Activated B cell treated with CpG ODN at 0.5 μM for 24 hours (primary cell): ENCODE measurements at regions of chrX and their contacts with region 1.

Region 1: DNA sequence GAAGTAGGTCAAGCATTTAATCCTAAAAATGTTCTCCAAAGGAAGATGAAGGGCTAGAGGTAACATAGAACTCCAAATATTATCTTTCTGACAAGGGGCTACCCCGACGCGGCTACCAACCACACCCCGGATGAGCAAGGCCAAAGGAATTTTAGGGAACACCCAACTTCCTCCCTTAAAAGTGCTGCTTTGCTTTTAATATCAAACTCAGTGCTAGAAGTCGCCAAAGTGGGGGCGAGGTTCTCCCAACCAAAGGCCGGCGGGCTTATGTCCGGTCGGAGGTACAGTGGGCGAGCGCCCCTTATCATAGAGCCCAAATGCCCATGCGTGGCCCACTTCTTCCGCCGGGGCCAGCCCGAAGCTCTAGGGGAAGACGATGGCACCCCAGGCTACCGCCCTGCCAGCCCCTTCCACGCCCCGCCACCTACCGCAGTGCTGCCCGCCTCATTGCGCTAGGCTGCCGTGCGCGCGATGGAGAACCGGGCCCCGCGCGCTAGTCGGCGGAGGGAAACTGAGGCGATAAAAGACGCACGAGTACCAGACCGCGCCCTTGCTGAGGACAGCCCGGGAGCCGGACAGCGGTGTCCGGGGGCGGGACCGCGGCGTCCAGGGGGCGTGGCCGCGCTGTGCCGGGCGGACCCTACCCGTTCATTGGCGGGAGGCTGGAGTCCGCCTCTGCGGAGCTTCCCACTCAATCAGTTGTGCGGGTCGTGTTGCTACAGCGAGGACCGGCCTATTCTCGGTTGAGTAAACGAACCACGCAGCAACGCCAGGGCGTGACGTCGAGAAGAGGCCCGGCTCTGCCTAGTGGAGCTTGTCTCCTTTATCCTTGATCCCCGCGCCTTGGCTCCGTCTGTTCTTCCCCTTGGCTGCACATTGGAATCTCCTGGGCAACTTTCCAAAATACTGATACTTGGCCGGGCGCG is at the start of gene ACOT9:
- DNase-seq: peak; percentile 66
- ATAC-seq: peak; percentile 90
- H3K4me3 Mint-ChIP-seq: peak within 1 kb of the TSS; percentile 92
- H3K27ac Mint-ChIP-seq: peak within 1 kb of the TSS; percentile 92
- H3K4me1 Mint-ChIP-seq: peaks cover 34% of the 10 kb centered on the region
- H3K27me3 Mint-ChIP-seq: no peaks in the 10 kb centered on the region
- CTCF ChIP-seq: no peak
- total RNA-seq, gene ACOT9: 46.0 and 49.4 TPM in 2 replicates

Region 2: DNA sequence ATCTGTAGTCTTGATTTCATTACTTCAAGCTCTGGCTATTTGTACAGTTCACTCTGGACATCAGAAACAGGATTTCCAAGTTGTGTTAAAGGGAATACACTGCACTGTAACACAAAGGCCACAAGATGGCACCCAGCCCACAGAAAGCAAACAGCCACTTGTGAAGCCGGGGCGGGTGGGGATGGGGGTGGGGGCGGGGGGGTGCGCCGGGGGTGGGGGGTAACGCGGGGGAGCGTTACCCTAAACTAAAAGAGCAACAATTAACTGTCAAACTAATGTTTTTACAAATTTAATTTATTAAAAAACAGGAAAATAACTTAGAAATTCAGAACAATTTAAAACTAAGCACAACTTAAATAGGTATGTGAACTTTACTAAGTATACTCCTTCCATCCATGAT is 48.4 kb before region 1 on chrX:
- CTCF ChIA-PET with region 1: no interaction called
- POLR2A ChIA-PET with region 1: interaction called, 3 read pairs
- intact Hi-C with region 1: loop called (anchors 5 kb)
- DNase-seq: no peak
- ATAC-seq: peak; percentile 78
- H3K4me3 Mint-ChIP-seq: no peak overlapping the region
- H3K27ac Mint-ChIP-seq: no peak overlapping the region
- H3K4me1 Mint-ChIP-seq: no peaks in the 10 kb centered on the region
- H3K27me3 Mint-ChIP-seq: no peaks in the 10 kb centered on the region
- CTCF ChIP-seq: no peak

Region 3: GRCh38 chrX:23732704-23733103 is 10.3 kb before region 1 on chrX:
- CTCF ChIA-PET with region 1: no interaction called
- POLR2A ChIA-PET with region 1: interaction called, 9 read pairs
- intact Hi-C with region 1: loop called (anchors 1 kb)
- DNase-seq: no peak
- ATAC-seq: peak; percentile 77
- H3K4me3 Mint-ChIP-seq: peak overlapping the region; percentile 37
- H3K27ac Mint-ChIP-seq: peak overlapping the region; percentile 80
- H3K4me1 Mint-ChIP-seq: peaks cover 18% of the 10 kb centered on the region
- H3K27me3 Mint-ChIP-seq: no peaks in the 10 kb centered on the region
- CTCF ChIP-seq: no peak

Region 4: GRCh38 chrX:23756157-23756559 is 13.2 kb after region 1 on chrX:
- CTCF ChIA-PET with region 1: interaction called, 3 read pairs
- POLR2A ChIA-PET with region 1: interaction called, 3 read pairs
- intact Hi-C with region 1: loop called (anchors 1 kb)
- DNase-seq: peak; percentile 18
- ATAC-seq: peak; percentile 64
- H3K4me3 Mint-ChIP-seq: no peak overlapping the region
- H3K27ac Mint-ChIP-seq: peak overlapping the region; percentile 35
- H3K4me1 Mint-ChIP-seq: peaks cover 3% of the 10 kb centered on the region
- H3K27me3 Mint-ChIP-seq: no peaks in the 10 kb centered on the region
- CTCF ChIP-seq: peak; percentile 26

Region 5: DNA sequence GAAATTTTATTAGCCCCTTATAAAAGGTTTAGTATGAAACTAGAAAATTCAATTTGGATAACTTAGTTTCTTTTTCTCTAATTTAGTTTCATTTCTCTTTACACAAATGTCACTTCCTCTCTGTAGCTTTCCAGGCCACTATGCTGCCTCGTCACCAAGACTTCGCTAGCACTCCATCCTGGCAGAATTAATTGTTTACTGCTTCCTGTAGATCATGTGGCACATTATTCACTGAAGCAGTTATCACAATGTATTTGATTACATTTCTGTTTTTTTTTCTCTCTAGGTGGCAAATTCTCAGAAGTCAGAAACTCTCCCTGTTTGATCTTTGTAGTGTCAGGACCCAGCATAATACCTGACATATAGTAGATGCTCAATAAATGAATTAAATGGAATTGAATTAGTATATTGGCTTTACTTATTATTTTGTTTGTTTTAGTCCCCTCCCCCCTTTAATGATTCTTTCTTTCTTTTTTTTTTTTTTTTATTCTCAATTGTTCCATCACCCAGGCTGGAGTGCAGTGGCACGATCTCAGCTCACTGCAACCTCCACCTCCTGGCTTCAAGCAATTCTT is 30.7 kb after region 1 on chrX:
- CTCF ChIA-PET with region 1: no interaction called
- POLR2A ChIA-PET with region 1: interaction called, 6 read pairs
- intact Hi-C with region 1: loop called (anchors 1 kb)
- DNase-seq: no peak
- ATAC-seq: peak; percentile 88
- H3K4me3 Mint-ChIP-seq: peak overlapping the region; percentile 75
- H3K27ac Mint-ChIP-seq: peak overlapping the region; percentile 96
- H3K4me1 Mint-ChIP-seq: peaks cover 21% of the 10 kb centered on the region
- H3K27me3 Mint-ChIP-seq: no peaks in the 10 kb centered on the region
- CTCF ChIP-seq: no peak

Region 6: GRCh38 chrX:23907498-23908218 is 164.7 kb after region 1 on chrX and contains the starts of genes APOO and CXorf58:
- CTCF ChIA-PET with region 1: interaction called, 9 read pairs
- POLR2A ChIA-PET with region 1: interaction called, 4 read pairs
- intact Hi-C with region 1: loop called (anchors 1 kb)
- DNase-seq: peak; percentile 85
- ATAC-seq: peak; percentile 90
- H3K4me3 Mint-ChIP-seq: peak within 1 kb of the TSS; percentile 82
- H3K27ac Mint-ChIP-seq: peak within 1 kb of the TSS; percentile 88
- H3K4me1 Mint-ChIP-seq: peaks cover 17% of the 10 kb centered on the region
- H3K27me3 Mint-ChIP-seq: no peaks in the 10 kb centered on the region
- CTCF ChIP-seq: peak; percentile 7
- total RNA-seq, gene APOO: 14.0 and 16.6 TPM in 2 replicates
- total RNA-seq, gene CXorf58: not detected in 2 replicates

Region 7: GRCh38 chrX:24169211-24169610 is 426.3 kb after region 1 on chrX:
- CTCF ChIA-PET with region 1: no interaction called
- POLR2A ChIA-PET with region 1: no interaction called
- intact Hi-C with region 1: loop called (anchors 5 kb)
- DNase-seq: no peak
- ATAC-seq: peak; percentile 90
- H3K4me3 Mint-ChIP-seq: peak overlapping the region; percentile 45
- H3K27ac Mint-ChIP-seq: peak overlapping the region; percentile 81
- H3K4me1 Mint-ChIP-seq: peaks cover 50% of the 10 kb centered on the region
- H3K27me3 Mint-ChIP-seq: no peaks in the 10 kb centered on the region
- CTCF ChIP-seq: no peak

Region 8: DNA sequence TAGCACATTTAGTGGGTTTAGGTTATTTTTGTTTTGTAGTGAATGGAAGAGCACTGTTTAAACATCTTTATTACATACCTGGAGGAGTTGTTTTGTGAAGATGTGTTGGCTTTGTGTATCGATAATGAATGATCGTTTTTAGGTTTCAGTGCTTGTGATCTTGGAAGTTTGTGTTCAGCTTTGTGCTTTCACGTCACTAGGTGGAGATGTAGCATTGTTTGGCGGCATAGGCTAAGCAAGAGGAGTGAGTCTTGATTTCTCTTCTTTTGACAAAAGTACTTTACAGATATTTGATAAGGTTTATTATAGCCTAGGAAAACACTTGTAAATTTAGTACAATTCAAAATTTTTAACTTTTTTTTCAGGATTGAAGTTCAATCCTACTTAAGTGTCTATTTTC is 772.5 kb after region 1 on chrX:
- CTCF ChIA-PET with region 1: no interaction called
- POLR2A ChIA-PET with region 1: no interaction called
- intact Hi-C with region 1: no loop called
- DNase-seq: no peak
- ATAC-seq: no peak
- H3K4me3 Mint-ChIP-seq: no peak overlapping the region
- H3K27ac Mint-ChIP-seq: no peak overlapping the region
- H3K4me1 Mint-ChIP-seq: no peaks in the 10 kb centered on the region
- H3K27me3 Mint-ChIP-seq: no peaks in the 10 kb centered on the region
- CTCF ChIP-seq: no peak